Endothelial cell of umbilical vein (primary cell): ENCODE measurements at regions of chr6 and their contacts with region 1.

Region 1: DNA sequence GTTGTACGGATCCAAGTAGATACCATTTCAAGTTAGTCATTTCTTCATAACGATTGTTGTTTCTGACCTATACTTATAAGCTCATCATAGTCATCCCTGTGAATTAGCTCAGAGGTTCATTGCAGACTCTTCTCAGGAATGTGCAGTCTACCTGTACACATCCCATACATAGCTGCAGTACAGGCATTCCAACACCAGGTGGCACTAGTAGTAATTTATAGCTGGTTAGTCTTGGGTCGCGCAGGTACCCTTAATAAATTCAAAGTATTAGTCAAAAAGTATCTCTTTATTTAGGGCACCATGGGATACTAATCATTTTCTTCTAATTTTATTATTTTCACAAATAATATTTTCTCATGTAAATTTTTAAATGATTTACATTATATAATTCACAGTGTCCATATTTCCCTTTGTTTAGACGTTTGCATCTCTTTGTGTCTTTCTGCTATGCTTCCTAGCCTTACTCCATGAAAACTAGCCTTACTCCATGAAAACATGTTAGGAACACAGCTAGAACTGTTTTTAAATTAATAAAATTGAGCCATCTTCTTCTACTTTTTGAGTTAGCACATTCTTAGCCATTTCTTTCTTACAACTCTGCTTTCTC is 128.6 kb upstream of the FAM83B start:
- DNase-seq: peak; percentile 61
- H3K4me3 ChIP-seq: no peak overlapping the region
- H3K27ac ChIP-seq: no peak overlapping the region
- H3K4me1 ChIP-seq: no peaks in the 10 kb centered on the region
- H3K27me3 ChIP-seq: peaks cover 0 to 2% of the 10 kb centered on the region in 2 experiments
- CTCF ChIP-seq: peak; percentile 64 to 76
- POLR2A ChIP-seq: no peak

Region 2: DNA sequence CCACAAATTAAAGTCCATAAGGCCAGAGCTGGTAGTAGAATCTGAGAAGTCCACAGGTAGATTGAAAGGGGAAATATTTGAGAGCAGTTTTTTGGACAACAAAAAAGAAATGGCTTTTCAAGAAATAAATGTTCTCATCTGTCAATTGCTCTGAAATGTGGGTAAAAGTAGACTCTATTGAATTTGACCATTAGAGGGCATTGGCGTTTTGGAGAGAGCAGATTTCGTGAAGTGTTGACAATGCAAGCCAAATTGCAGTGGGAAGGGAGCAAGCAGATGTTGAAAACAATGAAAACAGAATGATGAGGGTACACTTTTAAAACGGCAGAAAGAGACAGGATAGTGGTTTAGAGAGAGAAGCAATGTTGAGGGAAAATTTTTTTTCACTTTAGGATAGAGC is 20.5 kb before region 1 on chr6:
- CTCF ChIA-PET with region 1: interaction called, 13 read pairs
- POLR2A ChIA-PET with region 1: no interaction called
- dilution Hi-C with region 1: no loop called
- intact Hi-C with region 1: no loop called
- DNase-seq: no peak
- H3K4me3 ChIP-seq: no peak overlapping the region
- H3K27ac ChIP-seq: no peak overlapping the region
- H3K4me1 ChIP-seq: no peaks in the 10 kb centered on the region
- H3K27me3 ChIP-seq: no peaks in the 10 kb centered on the region
- CTCF ChIP-seq: no peak
- POLR2A ChIP-seq: no peak

Region 3: GRCh38 chr6:54702772-54703171 is 15.2 kb before region 1 on chr6:
- CTCF ChIA-PET with region 1: interaction called, 20 read pairs
- POLR2A ChIA-PET with region 1: no interaction called
- dilution Hi-C with region 1: no loop called
- intact Hi-C with region 1: no loop called
- DNase-seq: no peak
- H3K4me3 ChIP-seq: no peak overlapping the region
- H3K27ac ChIP-seq: no peak overlapping the region
- H3K4me1 ChIP-seq: no peaks in the 10 kb centered on the region
- H3K27me3 ChIP-seq: no peaks in the 10 kb centered on the region
- CTCF ChIP-seq: no peak
- POLR2A ChIP-seq: no peak

Region 4: DNA sequence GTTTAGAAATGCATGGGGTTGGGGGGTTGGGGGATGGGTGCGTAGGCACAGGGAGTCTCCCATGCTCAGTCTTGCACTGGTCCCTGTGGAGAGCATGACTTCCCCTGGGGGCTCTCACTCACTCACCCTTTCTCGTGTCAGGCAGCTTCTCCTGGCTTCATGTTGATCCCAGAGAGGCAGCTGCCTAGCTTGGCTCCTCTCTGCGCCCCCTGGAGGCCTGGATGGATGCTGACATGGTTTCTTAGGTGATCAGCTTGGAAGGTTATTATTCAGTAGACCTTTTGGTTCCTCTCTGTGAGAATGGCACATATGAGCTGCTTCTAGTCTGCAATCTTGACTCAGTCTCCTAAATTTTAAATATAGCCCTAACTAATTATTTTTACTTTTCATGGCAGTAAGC is 19.3 kb after region 1 on chr6:
- CTCF ChIA-PET with region 1: interaction called, 28 read pairs
- POLR2A ChIA-PET with region 1: no interaction called
- dilution Hi-C with region 1: no loop called
- intact Hi-C with region 1: no loop called
- DNase-seq: no peak
- H3K4me3 ChIP-seq: no peak overlapping the region
- H3K27ac ChIP-seq: no peak overlapping the region
- H3K4me1 ChIP-seq: no peaks in the 10 kb centered on the region
- H3K27me3 ChIP-seq: no peaks in the 10 kb centered on the region
- CTCF ChIP-seq: peak; percentile 15 to 29
- POLR2A ChIP-seq: no peak

Region 5: DNA sequence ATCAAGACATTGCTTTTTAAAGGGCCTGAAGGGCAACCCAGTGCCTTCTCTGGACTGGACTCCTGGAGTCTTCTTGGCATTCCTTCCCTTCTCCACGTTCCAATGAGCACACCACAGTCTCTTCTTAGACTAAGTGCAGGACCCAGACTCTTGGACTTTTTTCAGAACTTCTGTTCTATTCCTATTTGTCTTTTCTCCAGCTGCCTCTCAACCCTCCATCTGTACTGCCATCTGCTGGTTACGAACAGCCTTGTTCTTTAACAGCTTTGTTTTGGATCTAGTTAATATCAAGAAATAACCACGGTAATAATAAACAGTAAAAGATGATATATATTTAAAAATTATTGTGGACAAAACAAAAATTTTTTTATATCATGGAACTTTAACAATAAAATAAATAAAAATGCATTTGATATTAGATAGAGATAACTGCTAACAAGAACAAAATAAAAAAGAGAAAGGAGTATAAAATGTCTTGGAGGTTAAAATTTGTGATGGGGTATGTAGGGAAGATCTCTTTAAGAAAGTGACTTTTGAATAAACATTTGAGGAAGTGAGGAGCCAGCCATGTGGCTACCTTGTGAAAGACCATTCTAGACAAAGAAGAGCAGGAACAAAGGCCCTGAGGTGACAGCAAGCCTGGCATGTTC is 351.3 kb after region 1 on chr6:
- CTCF ChIA-PET with region 1: interaction called, 23 read pairs
- POLR2A ChIA-PET with region 1: no interaction called
- dilution Hi-C with region 1: no loop called
- intact Hi-C with region 1: loop called (anchors 1 kb)
- DNase-seq: peak; percentile 60
- H3K4me3 ChIP-seq: no peak overlapping the region
- H3K27ac ChIP-seq: no peak overlapping the region
- H3K4me1 ChIP-seq: no peaks in the 10 kb centered on the region
- H3K27me3 ChIP-seq: no peaks in the 10 kb centered on the region
- CTCF ChIP-seq: peak; percentile 35 to 46
- POLR2A ChIP-seq: no peak

Region 6: GRCh38 chr6:55239099-55239498 is 521.1 kb after region 1 on chr6:
- CTCF ChIA-PET with region 1: interaction called, 5 read pairs
- POLR2A ChIA-PET with region 1: no interaction called
- dilution Hi-C with region 1: no loop called
- intact Hi-C with region 1: loop called (anchors 2 kb)
- DNase-seq: peak; percentile 28
- H3K4me3 ChIP-seq: no peak overlapping the region
- H3K27ac ChIP-seq: no peak overlapping the region
- H3K4me1 ChIP-seq: no peaks in the 10 kb centered on the region
- H3K27me3 ChIP-seq: peaks cover 0 to 5% of the 10 kb centered on the region in 2 experiments
- CTCF ChIP-seq: no peak
- POLR2A ChIP-seq: no peak